Common myeloid progenitor, CD34-positive (primary cell): ENCODE measurements at regions of chr16 and their contacts with region 1.

Region 1: GRCh38 chr16:31861455-31861854 is 12.2 kb upstream of the ZNF267 start:
- DNase-seq: peak in 2 of 3 donors; percentile 31 to 56
- H3K4me3 ChIP-seq: no peak overlapping the region
- H3K27ac ChIP-seq: no peak overlapping the region
- H3K4me1 ChIP-seq: peaks cover 0 to 12% (median 4%) of the 10 kb centered on the region in 4 experiments
- H3K27me3 ChIP-seq: no peaks in the 10 kb centered on the region

Region 2: GRCh38 chr16:31873556-31874365 is 12.3 kb after region 1 on chr16 and contains the start of gene ZNF267:
- CTCF ChIA-PET with region 1: interaction called, 39 read pairs
- POLR2A ChIA-PET with region 1: no interaction called
- DNase-seq: peak; percentile 93 to 96 (median 96)
- H3K4me3 ChIP-seq: peak within 1 kb of the TSS; percentile 83 to 99 (median 97)
- H3K27ac ChIP-seq: peak within 1 kb of the TSS; percentile 96 to 97
- H3K4me1 ChIP-seq: peaks cover 28 to 73% (median 52%) of the 10 kb centered on the region in 4 experiments
- H3K27me3 ChIP-seq: no peaks in the 10 kb centered on the region